ENCODE measurements at regions of chr3 and their contacts with region 1.

Region 1: GRCh38 chr3:46297658-46298463 is 55.6 kb downstream of the CCR3 start:
- DNase-seq: no peak
- H3K4me3 Mint-ChIP-seq: no peak overlapping the region
- H3K27ac Mint-ChIP-seq: no peak overlapping the region
- H3K4me1 Mint-ChIP-seq: peaks cover 78% of the 10 kb centered on the region
- H3K27me3 Mint-ChIP-seq: peaks cover 11% of the 10 kb centered on the region

Region 2: DNA sequence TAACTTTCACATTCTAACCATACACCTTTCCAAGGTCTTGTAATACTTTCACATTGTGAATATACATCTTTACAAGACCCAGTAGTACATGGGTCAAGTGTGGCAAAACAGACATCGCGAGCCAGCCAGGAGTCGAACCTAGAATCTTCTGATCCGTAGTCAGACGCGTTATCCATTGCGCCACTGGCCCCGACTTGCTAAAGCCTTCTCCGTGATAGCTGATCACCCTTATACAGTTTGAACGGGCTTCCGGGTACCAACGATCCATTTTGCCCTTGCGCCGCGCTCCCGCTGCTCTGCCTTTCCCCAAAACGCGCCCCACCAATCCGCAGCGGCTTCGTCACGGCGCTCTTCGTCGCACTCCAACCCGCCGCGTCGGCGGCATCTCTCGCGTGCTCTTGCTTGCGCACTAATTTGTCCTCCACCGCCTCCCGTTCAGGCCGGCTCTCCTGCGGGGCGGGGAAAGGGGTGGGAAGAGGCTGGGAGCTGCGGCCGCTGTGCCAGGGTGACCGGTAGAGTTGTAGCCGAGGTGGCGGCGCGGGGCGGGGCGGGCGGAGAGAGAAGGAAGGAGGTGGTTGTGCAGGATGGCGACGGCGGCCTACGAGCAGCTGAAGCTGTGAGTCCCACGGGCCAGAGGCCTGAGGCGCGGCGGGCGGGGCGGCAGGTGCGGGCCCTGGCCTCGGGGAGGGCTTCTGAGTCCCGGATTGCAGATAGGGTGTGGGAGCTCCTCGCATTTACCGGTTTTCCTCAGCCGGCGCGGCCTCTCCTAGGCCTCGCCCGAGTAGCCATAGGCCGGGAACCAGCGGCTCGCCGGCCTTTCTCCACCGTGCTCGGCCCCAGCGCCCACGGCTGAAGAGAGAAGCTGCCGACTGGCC is 608.7 kb before region 1 on chr3 and contains the start of gene SACM1L:
- CTCF ChIA-PET with region 1: no interaction called
- intact Hi-C with region 1: loop called (anchors 5 kb)
- DNase-seq: peak; percentile 98
- H3K4me3 Mint-ChIP-seq: peak within 1 kb of the TSS; percentile 83
- H3K27ac Mint-ChIP-seq: peak within 1 kb of the TSS; percentile 90
- H3K4me1 Mint-ChIP-seq: peaks cover 44% of the 10 kb centered on the region
- H3K27me3 Mint-ChIP-seq: peaks cover 3% of the 10 kb centered on the region
- total RNA-seq, gene SACM1L: 44.9 to 51.0 TPM

Region 3: GRCh38 chr3:45978006-45978761 is 319.7 kb before region 1 on chr3:
- CTCF ChIA-PET with region 1: no interaction called
- intact Hi-C with region 1: loop called (anchors 2 kb)
- DNase-seq: peak; percentile 89
- H3K4me3 Mint-ChIP-seq: no peak overlapping the region
- H3K27ac Mint-ChIP-seq: peak overlapping the region; percentile 80
- H3K4me1 Mint-ChIP-seq: peaks cover 65% of the 10 kb centered on the region
- H3K27me3 Mint-ChIP-seq: no peaks in the 10 kb centered on the region

Region 4: GRCh38 chr3:46208167-46208704 is 89.6 kb before region 1 on chr3 and contains the start of gene CCR1:
- CTCF ChIA-PET with region 1: interaction called, 3 read pairs
- intact Hi-C with region 1: loop called (anchors 1 kb)
- DNase-seq: peak; percentile 67
- H3K4me3 Mint-ChIP-seq: no peak within 1 kb of the TSS
- H3K27ac Mint-ChIP-seq: no peak within 1 kb of the TSS
- H3K4me1 Mint-ChIP-seq: peaks cover 15% of the 10 kb centered on the region
- H3K27me3 Mint-ChIP-seq: peaks cover 2% of the 10 kb centered on the region
- total RNA-seq, gene CCR1: not detected

Region 5: GRCh38 chr3:46359733-46360493 is 62.1 kb after region 1 on chr3:
- CTCF ChIA-PET with region 1: interaction called, 3 read pairs
- intact Hi-C with region 1: loop called (anchors 1 kb)
- DNase-seq: peak; percentile 54
- H3K4me3 Mint-ChIP-seq: no peak overlapping the region
- H3K27ac Mint-ChIP-seq: no peak overlapping the region
- H3K4me1 Mint-ChIP-seq: peaks cover 25% of the 10 kb centered on the region
- H3K27me3 Mint-ChIP-seq: peaks cover 22% of the 10 kb centered on the region

Region 6: DNA sequence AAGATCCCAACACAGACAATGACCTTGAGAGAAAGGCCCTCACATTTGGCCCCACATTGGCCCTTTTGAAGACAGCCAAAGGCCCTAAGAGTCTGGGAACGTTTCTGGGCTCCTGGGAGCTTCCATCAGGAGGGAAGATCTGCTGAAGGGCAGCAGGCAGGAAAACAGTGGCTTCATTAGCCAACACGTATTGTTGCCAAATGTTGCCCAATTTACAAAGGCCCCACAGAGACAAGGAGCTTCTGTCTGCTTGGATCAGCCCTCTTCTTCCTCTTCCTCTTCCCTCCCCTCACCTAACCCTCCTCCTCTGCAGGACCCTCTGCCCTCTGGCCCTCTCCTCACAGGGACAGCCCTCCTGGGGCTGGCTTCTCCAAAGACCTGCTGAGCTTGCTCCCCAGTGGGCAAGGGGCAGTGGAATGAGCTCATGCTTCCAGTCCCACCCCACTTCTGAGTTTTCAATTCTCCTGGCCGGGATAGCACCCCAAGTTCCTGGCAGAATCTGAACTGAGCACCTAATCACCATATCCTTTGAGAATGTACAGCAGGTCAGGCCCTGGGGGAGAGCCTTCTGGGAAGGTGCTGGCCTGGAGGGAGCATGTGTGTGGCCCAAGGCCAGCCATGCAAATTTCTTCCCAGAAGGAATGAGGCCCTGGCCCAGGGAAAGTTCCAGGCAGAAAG is 172.0 kb after region 1 on chr3:
- CTCF ChIA-PET with region 1: no interaction called
- intact Hi-C with region 1: no loop called
- DNase-seq: no peak
- H3K4me3 Mint-ChIP-seq: no peak overlapping the region
- H3K27ac Mint-ChIP-seq: no peak overlapping the region
- H3K4me1 Mint-ChIP-seq: no peaks in the 10 kb centered on the region
- H3K27me3 Mint-ChIP-seq: peaks cover 16% of the 10 kb centered on the region

Region 7: DNA sequence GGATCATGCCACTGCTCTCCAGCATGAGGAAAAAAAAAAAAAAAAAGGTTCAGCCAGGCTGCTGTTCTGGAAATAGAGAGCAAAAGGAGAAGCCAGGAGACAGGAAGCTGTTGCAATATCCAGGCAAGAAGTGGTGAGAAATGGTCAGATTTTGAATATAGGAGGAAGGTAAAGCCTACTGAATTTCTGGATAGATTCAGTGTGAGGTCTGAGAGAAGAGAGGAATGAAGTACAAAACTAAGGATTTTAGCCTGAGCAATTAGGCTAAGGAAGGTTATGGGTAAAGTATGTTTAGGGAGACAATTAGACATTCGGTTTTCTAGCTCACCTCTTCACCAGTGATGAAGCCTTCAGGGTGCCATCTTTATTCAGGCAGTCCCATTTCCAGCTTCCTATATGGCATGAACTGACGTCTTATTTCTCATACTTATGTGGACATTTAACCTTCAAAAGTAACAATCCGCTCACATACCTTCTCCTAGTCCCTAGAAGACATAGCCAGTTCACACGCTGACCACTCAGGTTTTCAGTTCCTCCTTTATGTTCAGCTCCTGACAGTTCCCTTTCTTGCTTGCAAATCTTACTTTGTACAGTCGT is 927.5 kb after region 1 on chr3:
- CTCF ChIA-PET with region 1: no interaction called
- intact Hi-C with region 1: no loop called
- DNase-seq: no peak
- H3K4me3 Mint-ChIP-seq: no peak overlapping the region
- H3K27ac Mint-ChIP-seq: no peak overlapping the region
- H3K4me1 Mint-ChIP-seq: no peaks in the 10 kb centered on the region
- H3K27me3 Mint-ChIP-seq: no peaks in the 10 kb centered on the region

Measured in activated naive CD4-positive, alpha-beta T cell treated with anti-CD3 and anti-CD28 coated beads for 36 hours (primary cell).